RWPE1 (cell line): ENCODE measurements at regions of chr14 and their contacts with region 1.

Region 1: GRCh38 chr14:58629281-58629680 is 8.5 kb upstream of the DACT1 start:
- DNase-seq: no peak
- H3K27ac ChIP-seq: no peak overlapping the region
- CTCF ChIP-seq: no peak

Region 2: DNA sequence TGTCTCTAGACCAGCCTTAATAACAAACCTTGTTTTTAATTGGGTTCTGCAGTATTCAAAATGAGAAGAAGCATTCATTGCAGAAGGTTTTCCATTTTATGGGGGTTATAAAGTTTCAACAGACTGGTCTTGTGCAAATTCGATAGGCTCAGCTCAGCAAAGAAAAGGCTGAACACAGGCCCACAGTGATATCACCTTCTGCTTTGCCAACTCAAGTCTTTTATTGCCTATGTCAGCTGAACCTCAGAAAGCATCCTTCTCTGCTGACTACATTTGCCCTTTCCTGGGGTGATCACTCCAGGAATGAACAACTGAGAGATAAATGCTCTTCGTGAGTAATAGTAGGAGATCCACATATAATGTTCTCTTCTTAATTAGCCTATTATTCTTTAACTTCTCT is 1081.8 kb after region 1 on chr14:
- CTCF ChIA-PET with region 1: no interaction called
- POLR2A ChIA-PET with region 1: interaction called, 14 read pairs
- DNase-seq: no peak
- H3K27ac ChIP-seq: no peak overlapping the region
- CTCF ChIP-seq: no peak